Endothelial cell of umbilical vein (primary cell): ENCODE measurements at regions of chr15 and their contacts with region 1.

Region 1: GRCh38 chr15:75639709-75640482 is at the start of gene IMP3:
- DNase-seq: peak; percentile 97
- H3K4me3 ChIP-seq: peak within 1 kb of the TSS; percentile 26 to 68 (median 60)
- H3K27ac ChIP-seq: peak within 1 kb of the TSS; percentile 31
- H3K4me1 ChIP-seq: peaks cover 23% of the 10 kb centered on the region
- H3K27me3 ChIP-seq: no peaks in the 10 kb centered on the region
- CTCF ChIP-seq: no peak
- POLR2A ChIP-seq: peak; percentile 97
- total RNA-seq, gene IMP3: 35.5 and 41.3 TPM in 2 replicates

Region 2: GRCh38 chr15:75367913-75368688 is 271.8 kb before region 1 on chr15 and contains the start of gene MAN2C1:
- CTCF ChIA-PET with region 1: interaction called, 10 read pairs
- POLR2A ChIA-PET with region 1: interaction called, 4 read pairs
- dilution Hi-C with region 1: no loop called
- intact Hi-C with region 1: loop called (anchors 2 kb)
- DNase-seq: peak; percentile 93
- H3K4me3 ChIP-seq: peak within 1 kb of the TSS; percentile 50 to 83 (median 51)
- H3K27ac ChIP-seq: peak within 1 kb of the TSS; percentile 79
- H3K4me1 ChIP-seq: peaks cover 15% of the 10 kb centered on the region
- H3K27me3 ChIP-seq: no peaks in the 10 kb centered on the region
- CTCF ChIP-seq: peak; percentile 63 to 76
- POLR2A ChIP-seq: peak; percentile 93
- total RNA-seq, gene MAN2C1: 248 TPM in 2 replicates

Region 3: GRCh38 chr15:75453703-75454470 is 186.0 kb before region 1 on chr15:
- CTCF ChIA-PET with region 1: interaction called, 6 read pairs
- POLR2A ChIA-PET with region 1: interaction called, 7 read pairs
- dilution Hi-C with region 1: no loop called
- intact Hi-C with region 1: loop called (anchors 2 kb)
- DNase-seq: peak; percentile 100
- H3K4me3 ChIP-seq: peak overlapping the region; percentile 61 to 93 (median 84)
- H3K27ac ChIP-seq: peak overlapping the region; percentile 78
- H3K4me1 ChIP-seq: peaks cover 29% of the 10 kb centered on the region
- H3K27me3 ChIP-seq: no peaks in the 10 kb centered on the region
- CTCF ChIP-seq: no peak
- POLR2A ChIP-seq: peak; percentile 52

Region 4: GRCh38 chr15:75483961-75484360 is 155.9 kb before region 1 on chr15:
- CTCF ChIA-PET with region 1: no interaction called
- POLR2A ChIA-PET with region 1: no interaction called
- dilution Hi-C with region 1: no loop called
- intact Hi-C with region 1: no loop called
- DNase-seq: peak; percentile 83
- H3K4me3 ChIP-seq: no peak overlapping the region
- H3K27ac ChIP-seq: peak overlapping the region; percentile 22
- H3K4me1 ChIP-seq: peaks cover 19% of the 10 kb centered on the region
- H3K27me3 ChIP-seq: no peaks in the 10 kb centered on the region
- CTCF ChIP-seq: no peak
- POLR2A ChIP-seq: no peak

Region 5: GRCh38 chr15:75508840-75509532 is 130.9 kb before region 1 on chr15:
- CTCF ChIA-PET with region 1: interaction called, 12 read pairs
- POLR2A ChIA-PET with region 1: no interaction called
- dilution Hi-C with region 1: no loop called
- intact Hi-C with region 1: loop called (anchors 2 kb)
- DNase-seq: peak; percentile 58
- H3K4me3 ChIP-seq: no peak overlapping the region
- H3K27ac ChIP-seq: no peak overlapping the region
- H3K4me1 ChIP-seq: no peaks in the 10 kb centered on the region
- H3K27me3 ChIP-seq: no peaks in the 10 kb centered on the region
- CTCF ChIP-seq: peak; percentile 30 to 61
- POLR2A ChIP-seq: no peak

Region 6: GRCh38 chr15:75578948-75579920 is 60.7 kb before region 1 on chr15 and contains the start of gene PTPN9:
- CTCF ChIA-PET with region 1: interaction called, 4 read pairs
- POLR2A ChIA-PET with region 1: no interaction called
- dilution Hi-C with region 1: no loop called
- intact Hi-C with region 1: loop called (anchors 1 kb)
- DNase-seq: peak; percentile 73
- H3K4me3 ChIP-seq: peak within 1 kb of the TSS; percentile 64 to 99 (median 97)
- H3K27ac ChIP-seq: peak within 1 kb of the TSS; percentile 68
- H3K4me1 ChIP-seq: peaks cover 11% of the 10 kb centered on the region
- H3K27me3 ChIP-seq: no peaks in the 10 kb centered on the region
- CTCF ChIP-seq: peak; percentile 16 to 54
- POLR2A ChIP-seq: peak; percentile 34
- total RNA-seq, gene PTPN9: 31.4 and 32.0 TPM in 2 replicates

Region 7: GRCh38 chr15:75661091-75661777 is 21.3 kb after region 1 on chr15:
- CTCF ChIA-PET with region 1: interaction called, 14 read pairs
- POLR2A ChIA-PET with region 1: interaction called, 6 read pairs
- dilution Hi-C with region 1: no loop called
- intact Hi-C with region 1: loop called (anchors 2 kb)
- DNase-seq: peak; percentile 64
- H3K4me3 ChIP-seq: no peak overlapping the region
- H3K27ac ChIP-seq: no peak overlapping the region
- H3K4me1 ChIP-seq: peaks cover 5% of the 10 kb centered on the region
- H3K27me3 ChIP-seq: no peaks in the 10 kb centered on the region
- CTCF ChIP-seq: no peak
- POLR2A ChIP-seq: no peak

Region 8: GRCh38 chr15:75666823-75667501 is 27.1 kb after region 1 on chr15:
- CTCF ChIA-PET with region 1: interaction called, 8 read pairs
- POLR2A ChIA-PET with region 1: no interaction called
- dilution Hi-C with region 1: no loop called
- intact Hi-C with region 1: loop called (anchors 2 kb)
- DNase-seq: peak; percentile 85
- H3K4me3 ChIP-seq: no peak overlapping the region
- H3K27ac ChIP-seq: peak overlapping the region; percentile 50
- H3K4me1 ChIP-seq: peaks cover 10% of the 10 kb centered on the region
- H3K27me3 ChIP-seq: no peaks in the 10 kb centered on the region
- CTCF ChIP-seq: no peak
- POLR2A ChIP-seq: no peak